Endothelial cell of umbilical vein (primary cell): ENCODE measurements at regions of chr9 and their contacts with region 1.

Region 1: GRCh38 chr9:69097064-69097463 is 61.5 kb downstream of the FXN start:
- DNase-seq: peak; percentile 93
- H3K4me3 ChIP-seq: no peak overlapping the region
- H3K27ac ChIP-seq: peak overlapping the region; percentile 89
- H3K4me1 ChIP-seq: peaks cover 41% of the 10 kb centered on the region
- H3K27me3 ChIP-seq: no peaks in the 10 kb centered on the region
- CTCF ChIP-seq: no peak
- POLR2A ChIP-seq: peak; percentile 82

Region 2: DNA sequence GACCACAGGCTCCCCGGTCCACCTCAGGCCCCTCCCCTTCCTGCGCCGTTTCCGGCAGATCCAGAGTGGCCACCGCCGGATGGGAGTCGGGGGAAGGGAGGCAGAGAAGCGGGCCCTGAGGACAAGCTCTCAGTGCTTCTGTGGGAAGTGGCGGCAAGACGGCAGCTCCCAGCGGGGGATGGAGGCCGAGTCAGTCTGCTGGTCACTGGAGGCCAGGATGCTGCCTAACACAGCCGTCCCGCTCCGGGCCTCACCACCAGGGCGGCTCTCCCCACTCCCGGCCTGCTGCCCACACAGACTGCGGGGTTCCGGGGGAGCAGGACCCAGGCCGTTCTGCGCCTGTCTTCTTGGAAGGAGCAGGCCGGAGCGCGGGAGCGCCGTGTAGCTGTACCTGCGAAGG is 30.1 kb before region 1 on chr9:
- CTCF ChIA-PET with region 1: no interaction called
- POLR2A ChIA-PET with region 1: no interaction called
- dilution Hi-C with region 1: no loop called
- intact Hi-C with region 1: no loop called
- DNase-seq: no peak
- H3K4me3 ChIP-seq: no peak overlapping the region
- H3K27ac ChIP-seq: no peak overlapping the region
- H3K4me1 ChIP-seq: no peaks in the 10 kb centered on the region
- H3K27me3 ChIP-seq: no peaks in the 10 kb centered on the region
- CTCF ChIP-seq: no peak
- POLR2A ChIP-seq: no peak

Region 3: GRCh38 chr9:69083321-69083720 is 13.7 kb before region 1 on chr9:
- CTCF ChIA-PET with region 1: interaction called, 5 read pairs
- POLR2A ChIA-PET with region 1: no interaction called
- dilution Hi-C with region 1: no loop called
- intact Hi-C with region 1: loop called (anchors 1 kb)
- DNase-seq: peak; percentile 84
- H3K4me3 ChIP-seq: no peak overlapping the region
- H3K27ac ChIP-seq: peak overlapping the region; percentile 36
- H3K4me1 ChIP-seq: peaks cover 27% of the 10 kb centered on the region
- H3K27me3 ChIP-seq: no peaks in the 10 kb centered on the region
- CTCF ChIP-seq: no peak
- POLR2A ChIP-seq: no peak

Region 4: DNA sequence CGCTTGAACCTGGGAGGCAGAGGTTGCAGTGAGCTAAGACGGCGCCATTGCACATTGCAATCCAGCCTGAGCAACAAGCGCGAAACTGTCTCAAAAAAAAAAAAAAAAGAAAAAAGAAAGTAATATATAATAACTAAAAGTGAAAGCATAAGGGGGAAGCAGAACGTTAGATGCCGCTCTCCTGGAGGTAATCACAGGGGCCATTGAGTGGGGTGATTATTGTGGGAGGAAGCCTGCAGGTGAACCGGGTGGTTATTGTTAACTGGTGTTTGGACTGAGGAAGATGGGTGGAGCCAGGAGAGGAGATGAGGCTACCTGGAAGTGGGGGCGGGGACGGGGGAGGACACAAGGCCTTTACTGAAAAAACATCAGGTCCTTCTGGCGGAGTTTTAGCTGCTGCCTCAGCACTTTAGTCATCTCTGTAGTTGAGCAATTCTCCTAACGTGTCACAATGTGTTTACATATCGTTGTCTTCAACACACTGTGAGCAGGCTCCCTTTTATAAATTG is 71.7 kb after region 1 on chr9:
- CTCF ChIA-PET with region 1: interaction called, 3 read pairs
- POLR2A ChIA-PET with region 1: no interaction called
- dilution Hi-C with region 1: no loop called
- intact Hi-C with region 1: loop called (anchors 1 kb)
- DNase-seq: no peak
- H3K4me3 ChIP-seq: no peak overlapping the region
- H3K27ac ChIP-seq: no peak overlapping the region
- H3K4me1 ChIP-seq: peaks cover 35% of the 10 kb centered on the region
- H3K27me3 ChIP-seq: no peaks in the 10 kb centered on the region
- CTCF ChIP-seq: no peak
- POLR2A ChIP-seq: no peak